ENCODE measurements at regions of chr6 and their contacts with region 1.

Region 1: GRCh38 chr6:12289933-12290820 is at the start of gene EDN1:
- DNase-seq: peak; percentile 72 to 86 (median 80)
- ATAC-seq: peak; percentile 78 to 95 (median 91)
- H3K4me3 ChIP-seq: peak within 1 kb of the TSS; percentile 1 to 62 (median 50)
- H3K27ac ChIP-seq: peak within 1 kb of the TSS in 11 of 12 donors; percentile 13 to 74 (median 41)
- H3K4me1 ChIP-seq: peaks cover 0 to 27% (median 9%) of the 10 kb centered on the region in 12 donors
- H3K27me3 ChIP-seq: peaks cover 0 to 15% (median 4%) of the 10 kb centered on the region in 9 donors
- CTCF ChIP-seq: peak; percentile 27 to 66 (median 42)
- POLR2A ChIP-seq: peak in 1 of 2 donors; percentile 67
- total RNA-seq, gene EDN1: 1.0 to 11.6 (median 3.2) TPM

Region 2: GRCh38 chr6:11595903-11596302 is 694.3 kb before region 1 on chr6:
- intact Hi-C with region 1: loop called in 2 of 10 experiments (anchors 5 kb)
- DNase-seq: no peak
- ATAC-seq: no peak
- H3K4me3 ChIP-seq: no peak overlapping the region
- H3K27ac ChIP-seq: no peak overlapping the region
- H3K4me1 ChIP-seq: peaks cover 0 to 6% (median 0%) of the 10 kb centered on the region in 12 donors
- H3K27me3 ChIP-seq: no peaks in the 10 kb centered on the region
- CTCF ChIP-seq: peak in 4 of 12 donors; percentile 7 to 39 (median 21)
- POLR2A ChIP-seq: no peak

Region 3: GRCh38 chr6:12262236-12263061 is 27.7 kb before region 1 on chr6:
- intact Hi-C with region 1: no loop called
- DNase-seq: no peak
- ATAC-seq: no peak
- H3K4me3 ChIP-seq: no peak overlapping the region
- H3K27ac ChIP-seq: no peak overlapping the region
- H3K4me1 ChIP-seq: peaks cover 0 to 23% (median 0%) of the 10 kb centered on the region in 12 donors
- H3K27me3 ChIP-seq: no peaks in the 10 kb centered on the region
- CTCF ChIP-seq: no peak
- POLR2A ChIP-seq: no peak

Region 4: DNA sequence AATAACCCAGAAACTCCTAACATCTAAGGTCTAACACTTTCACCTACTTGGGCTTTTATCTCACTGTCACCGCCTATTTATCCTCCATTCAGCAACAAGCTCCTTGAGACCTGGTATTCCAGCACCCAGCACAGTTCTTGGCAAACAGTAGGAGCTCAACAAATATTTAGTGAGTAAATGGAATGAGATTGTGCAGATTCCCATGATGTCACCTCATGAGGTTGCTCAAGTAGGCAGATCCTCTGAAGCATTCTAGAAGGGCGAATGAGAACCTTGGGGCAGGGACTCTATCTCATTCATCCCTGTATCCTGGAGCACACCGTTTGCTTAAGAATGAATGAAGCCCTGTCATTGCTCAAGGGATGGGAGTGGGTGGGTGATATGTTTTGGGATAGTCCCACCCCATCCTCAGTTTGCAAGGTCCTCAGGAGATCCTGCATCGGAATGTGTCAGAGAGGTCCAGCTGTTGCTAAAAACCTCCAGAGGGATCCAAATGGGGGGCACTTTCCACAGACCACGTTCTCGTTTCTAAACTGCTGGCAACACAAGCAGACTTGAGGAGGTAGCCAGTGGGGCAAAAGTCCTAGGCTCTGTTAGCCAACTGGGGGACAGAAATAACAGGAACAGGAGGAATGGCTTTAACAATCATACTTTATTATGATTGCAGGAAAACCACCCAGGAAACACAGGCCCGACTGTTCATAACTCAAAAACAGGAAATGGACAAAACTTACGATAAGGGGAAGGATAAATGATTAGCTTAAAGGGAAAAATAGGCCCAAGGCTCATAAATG is 42.0 kb after region 1 on chr6:
- intact Hi-C with region 1: no loop called
- DNase-seq: no peak
- ATAC-seq: peak in 3 of 4 donors; percentile 34 to 63 (median 42)
- H3K4me3 ChIP-seq: no peak overlapping the region
- H3K27ac ChIP-seq: peak overlapping the region in 1 of 12 donors; percentile 26
- H3K4me1 ChIP-seq: peaks cover 0 to 19% (median 9%) of the 10 kb centered on the region in 12 donors
- H3K27me3 ChIP-seq: no peaks in the 10 kb centered on the region
- CTCF ChIP-seq: no peak
- POLR2A ChIP-seq: no peak

Region 5: DNA sequence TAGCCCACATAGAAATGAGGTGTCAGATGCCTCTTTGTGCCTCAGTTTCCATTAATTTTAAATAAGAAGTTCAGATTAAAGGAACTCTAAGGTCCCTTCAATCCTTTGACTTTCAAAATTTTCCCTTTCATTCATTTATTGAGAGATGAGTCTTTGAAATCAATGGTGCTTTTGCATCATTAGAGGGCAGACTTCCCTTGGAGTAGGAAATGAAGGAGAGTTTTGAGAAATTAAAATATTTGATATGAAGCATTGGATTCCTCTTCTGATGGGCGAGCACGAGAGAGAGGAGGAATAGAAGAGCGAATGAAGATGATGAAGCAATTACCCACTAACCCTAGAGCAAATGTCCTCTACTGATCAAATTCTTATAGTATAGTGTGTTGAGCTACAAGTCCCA is 105.7 kb after region 1 on chr6:
- intact Hi-C with region 1: loop called in 2 of 10 experiments (anchors 10 kb)
- DNase-seq: no peak
- ATAC-seq: no peak
- H3K4me3 ChIP-seq: no peak overlapping the region
- H3K27ac ChIP-seq: no peak overlapping the region
- H3K4me1 ChIP-seq: peaks cover 0 to 12% (median 1%) of the 10 kb centered on the region in 12 donors
- H3K27me3 ChIP-seq: no peaks in the 10 kb centered on the region
- CTCF ChIP-seq: peak in 7 of 12 donors; percentile 17 to 46 (median 28)
- POLR2A ChIP-seq: no peak

Region 6: GRCh38 chr6:12605888-12606345 is 315.7 kb after region 1 on chr6:
- intact Hi-C with region 1: loop called (anchors 1 to 5 kb)
- DNase-seq: peak in 4 of 5 donors; percentile 30 to 40 (median 35)
- ATAC-seq: peak; percentile 63 to 83 (median 77)
- H3K4me3 ChIP-seq: no peak overlapping the region
- H3K27ac ChIP-seq: no peak overlapping the region
- H3K4me1 ChIP-seq: peaks cover 0 to 25% (median 3%) of the 10 kb centered on the region in 12 donors
- H3K27me3 ChIP-seq: no peaks in the 10 kb centered on the region
- CTCF ChIP-seq: peak; percentile 43 to 77 (median 65)
- POLR2A ChIP-seq: no peak

Region 7: GRCh38 chr6:13487122-13488014 is 1197.2 kb after region 1 on chr6 and contains the start of gene GFOD1:
- intact Hi-C with region 1: loop called in 1 of 10 experiments (anchors 10 kb)
- DNase-seq: peak; percentile 91 to 95 (median 92)
- ATAC-seq: peak; percentile 81 to 91 (median 86)
- H3K4me3 ChIP-seq: peak within 1 kb of the TSS; percentile 68 to 97 (median 90)
- H3K27ac ChIP-seq: peak within 1 kb of the TSS; percentile 86 to 98 (median 95)
- H3K4me1 ChIP-seq: peaks cover 0 to 47% (median 31%) of the 10 kb centered on the region in 12 donors
- H3K27me3 ChIP-seq: no peaks in the 10 kb centered on the region
- CTCF ChIP-seq: peak in 4 of 12 donors; percentile 21 to 36 (median 28)
- POLR2A ChIP-seq: peak; percentile 88 to 97
- total RNA-seq, gene GFOD1: 25.0 to 65.8 (median 41.9) TPM